Activated CD8-positive, alpha-beta memory T cell treated with anti-CD3 and anti-CD28 coated beads, Interleukin-2, amount 10 ng/mL, durations not matched to agents 7 days and 5 days (primary cell): ENCODE measurements at regions of chr22 and their contacts with region 1.

Region 1: DNA sequence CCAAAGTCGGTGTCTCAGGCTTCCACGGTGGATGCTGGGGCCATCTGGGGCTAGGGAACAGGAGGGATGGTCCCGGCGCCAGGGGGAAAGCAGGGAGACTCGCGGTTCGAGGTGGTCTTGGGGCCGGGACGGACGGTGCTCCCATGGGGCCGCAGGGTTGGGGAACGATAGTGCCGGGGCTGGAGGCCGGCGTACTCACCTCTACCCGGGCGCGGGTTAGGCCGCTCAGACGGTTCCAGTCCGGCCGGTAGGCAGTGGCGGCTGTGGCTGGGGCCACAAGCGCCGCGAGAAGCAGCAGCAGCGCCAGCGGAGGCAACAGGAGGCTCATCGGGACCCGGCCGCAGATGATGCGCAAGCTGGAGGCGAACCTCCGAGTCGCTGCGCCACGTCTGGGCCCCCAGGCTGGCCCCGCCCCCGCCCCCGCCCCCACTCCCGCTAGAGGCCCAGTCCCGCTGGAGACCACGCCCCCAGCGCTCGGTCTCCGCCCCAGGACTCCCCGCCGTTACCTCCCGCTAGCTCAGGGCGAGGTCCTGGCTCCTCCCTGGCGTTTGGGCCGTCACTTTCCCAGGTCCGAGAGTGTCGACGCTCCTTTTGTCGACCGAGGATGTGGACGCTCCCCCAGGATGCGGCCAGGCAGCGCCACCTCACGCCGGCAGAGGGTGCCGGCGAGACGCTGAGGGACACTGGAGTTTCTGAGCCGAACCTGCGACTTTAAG is at the start of gene SELENOM:
- DNase-seq: peak; percentile 92
- ATAC-seq: peak; percentile 97
- H3K4me3 Mint-ChIP-seq: peak within 1 kb of the TSS; percentile 78
- H3K27ac Mint-ChIP-seq: peak within 1 kb of the TSS; percentile 31
- H3K4me1 Mint-ChIP-seq: peaks cover 12% of the 10 kb centered on the region
- H3K27me3 Mint-ChIP-seq: peaks cover 12% of the 10 kb centered on the region
- total RNA-seq, gene SELENOM: 0.49 to 1.5 TPM

Region 2: GRCh38 chr22:30822216-30823014 is 284.9 kb before region 1 on chr22:
- CTCF ChIA-PET with region 1: no interaction called
- DNase-seq: no peak
- ATAC-seq: peak; percentile 57
- H3K4me3 Mint-ChIP-seq: no peak overlapping the region
- H3K27ac Mint-ChIP-seq: no peak overlapping the region
- H3K4me1 Mint-ChIP-seq: peaks cover 3% of the 10 kb centered on the region
- H3K27me3 Mint-ChIP-seq: peaks cover 44% of the 10 kb centered on the region

Region 3: GRCh38 chr22:31160328-31160978 is 53.1 kb after region 1 on chr22:
- CTCF ChIA-PET with region 1: interaction called, 11 read pairs
- DNase-seq: peak; percentile 47
- ATAC-seq: peak; percentile 30
- H3K4me3 Mint-ChIP-seq: peak overlapping the region; percentile 96
- H3K27ac Mint-ChIP-seq: peak overlapping the region; percentile 96
- H3K4me1 Mint-ChIP-seq: peaks cover 28% of the 10 kb centered on the region
- H3K27me3 Mint-ChIP-seq: peaks cover 4% of the 10 kb centered on the region

Region 4: GRCh38 chr22:31199183-31199582 is 91.8 kb after region 1 on chr22:
- CTCF ChIA-PET with region 1: no interaction called
- DNase-seq: no peak
- ATAC-seq: no peak
- H3K4me3 Mint-ChIP-seq: no peak overlapping the region
- H3K27ac Mint-ChIP-seq: no peak overlapping the region
- H3K4me1 Mint-ChIP-seq: no peaks in the 10 kb centered on the region
- H3K27me3 Mint-ChIP-seq: no peaks in the 10 kb centered on the region

Region 5: GRCh38 chr22:31262312-31263080 is 155.2 kb after region 1 on chr22:
- CTCF ChIA-PET with region 1: no interaction called
- DNase-seq: no peak
- ATAC-seq: no peak
- H3K4me3 Mint-ChIP-seq: no peak overlapping the region
- H3K27ac Mint-ChIP-seq: no peak overlapping the region
- H3K4me1 Mint-ChIP-seq: no peaks in the 10 kb centered on the region
- H3K27me3 Mint-ChIP-seq: no peaks in the 10 kb centered on the region